ENCODE measurements at regions of chr9 and their contacts with region 1.

Region 1: GRCh38 chr9:107484117-107484723 is 5.3 kb downstream of the KLF4 start:
- DNase-seq: peak; percentile 59
- H3K4me3 ChIP-seq: no peak overlapping the region
- H3K27ac ChIP-seq: no peak overlapping the region
- H3K27me3 ChIP-seq: peaks cover 11% of the 10 kb centered on the region
- CTCF ChIP-seq: peak; percentile 69

Region 2: DNA sequence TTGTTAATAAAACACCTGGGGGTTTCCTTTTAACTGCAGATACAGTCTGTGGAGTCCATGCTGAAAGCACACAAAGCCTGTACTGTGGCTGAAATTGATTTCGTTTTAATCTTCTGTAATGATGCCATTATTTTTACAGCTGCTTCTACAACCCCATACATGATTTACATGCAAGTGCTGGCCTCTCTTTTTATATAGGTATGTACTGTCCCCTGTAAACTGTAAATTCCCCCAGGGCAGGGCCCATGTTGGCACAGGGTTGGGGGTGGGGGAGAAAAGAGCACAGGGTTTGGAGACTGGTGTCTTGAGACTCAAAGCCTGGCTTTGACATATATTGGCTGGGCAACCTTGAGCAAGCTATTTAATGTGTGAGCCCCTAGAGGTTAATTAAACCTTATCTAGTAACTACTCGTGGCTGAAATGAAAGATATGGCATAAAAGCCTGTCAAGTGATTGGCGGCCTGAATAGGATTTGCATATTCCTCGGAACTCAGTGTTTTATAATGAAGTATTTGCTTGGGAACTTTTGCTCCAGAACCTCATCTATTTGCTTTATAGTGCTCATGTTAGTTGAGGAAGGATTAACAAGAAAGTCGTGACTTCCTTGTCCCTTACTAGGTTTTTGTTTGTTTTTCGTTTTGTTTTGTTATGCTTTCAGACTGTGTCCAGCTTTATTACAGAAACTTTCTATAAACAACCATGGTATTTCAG is 28.6 kb before region 1 on chr9:
- CTCF ChIA-PET with region 1: interaction called, 10 read pairs
- POLR2A ChIA-PET with region 1: no interaction called
- DNase-seq: no peak
- H3K4me3 ChIP-seq: no peak overlapping the region
- H3K27ac ChIP-seq: no peak overlapping the region
- H3K27me3 ChIP-seq: peaks cover 6% of the 10 kb centered on the region
- CTCF ChIP-seq: no peak

Region 3: GRCh38 chr9:108272349-108272899 is 788.2 kb after region 1 on chr9:
- CTCF ChIA-PET with region 1: interaction called, 17 read pairs
- POLR2A ChIA-PET with region 1: no interaction called
- DNase-seq: peak; percentile 7
- H3K4me3 ChIP-seq: peak overlapping the region; percentile 49
- H3K27ac ChIP-seq: peak overlapping the region; percentile 35
- H3K27me3 ChIP-seq: no peaks in the 10 kb centered on the region
- CTCF ChIP-seq: peak; percentile 60

Region 4: GRCh38 chr9:108761655-108762347 is 1277.6 kb after region 1 on chr9:
- CTCF ChIA-PET with region 1: interaction called, 21 read pairs
- POLR2A ChIA-PET with region 1: no interaction called
- DNase-seq: peak; percentile 13
- H3K4me3 ChIP-seq: no peak overlapping the region
- H3K27ac ChIP-seq: no peak overlapping the region
- H3K27me3 ChIP-seq: peaks cover 4% of the 10 kb centered on the region
- CTCF ChIP-seq: peak; percentile 88

Measured in AG04450 (cell line).